ENCODE measurements at regions of chr9 and their contacts with region 1.

Region 1: DNA sequence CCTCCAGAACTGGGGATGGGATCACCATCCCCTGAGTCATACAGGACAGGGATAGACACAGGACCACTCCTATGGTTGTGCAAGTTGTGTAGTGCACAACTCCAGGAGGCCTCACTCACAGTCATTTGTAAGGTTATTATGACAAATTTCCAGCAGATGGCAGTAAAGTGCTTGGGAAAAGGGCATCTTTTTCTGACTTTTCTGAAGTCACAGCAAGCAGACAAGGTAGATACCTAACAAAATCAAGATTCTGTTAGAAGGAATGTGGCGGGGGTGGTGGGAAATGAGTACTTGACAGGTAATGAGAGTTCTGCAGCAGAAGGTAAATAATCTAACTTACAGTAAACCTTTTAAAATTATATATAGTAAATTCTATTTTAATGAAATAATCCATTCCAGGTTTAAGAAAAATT is 16.7 kb upstream of the KIF27 start:
- DNase-seq: peak; percentile 51
- CTCF ChIP-seq: peak; percentile 50

Region 2: GRCh38 chr9:83920927-83921707 is 16.8 kb before region 1 on chr9 and contains the start of gene KIF27:
- CTCF ChIA-PET with region 1: interaction called, 30 read pairs
- POLR2A ChIA-PET with region 1: no interaction called
- DNase-seq: peak; percentile 97
- CTCF ChIP-seq: peak; percentile 15

Region 3: DNA sequence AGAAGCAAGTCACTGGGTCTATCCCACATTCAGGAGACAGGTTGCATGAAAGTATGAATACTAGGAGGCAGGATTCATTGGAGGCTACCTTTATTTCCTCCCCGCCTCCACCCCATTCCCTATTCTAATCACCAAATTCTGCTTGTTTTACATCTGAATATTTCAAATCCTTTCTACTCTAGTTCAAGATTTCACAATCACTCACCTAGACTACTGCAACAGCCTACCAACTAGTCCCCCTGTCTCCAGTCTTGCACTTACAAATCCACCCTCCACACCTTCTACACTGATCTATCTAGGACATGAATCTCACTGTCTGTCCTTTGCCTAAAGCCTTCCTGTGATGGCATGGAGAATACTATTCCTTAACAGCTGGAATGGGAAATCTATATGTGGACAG is 10.3 kb before region 1 on chr9:
- CTCF ChIA-PET with region 1: interaction called, 30 read pairs
- POLR2A ChIA-PET with region 1: no interaction called
- DNase-seq: no peak
- CTCF ChIP-seq: no peak

Region 4: GRCh38 chr9:84315278-84315877 is 377.5 kb after region 1 on chr9:
- CTCF ChIA-PET with region 1: interaction called, 28 read pairs
- POLR2A ChIA-PET with region 1: no interaction called
- DNase-seq: peak; percentile 59
- CTCF ChIP-seq: peak; percentile 84